Activated CD4-positive, alpha-beta T cell treated with anti-CD3 and anti-CD28 coated beads for 36 hours (primary cell): ENCODE measurements at regions of chr10 and their contacts with region 1.

Region 1: GRCh38 chr10:98664331-98665042 is 217.8 kb upstream of the HPS1 start:
- DNase-seq: peak; percentile 49
- ATAC-seq: peak; percentile 70
- H3K4me3 Mint-ChIP-seq: no peak overlapping the region
- H3K27ac Mint-ChIP-seq: no peak overlapping the region
- H3K4me1 Mint-ChIP-seq: no peaks in the 10 kb centered on the region
- H3K27me3 Mint-ChIP-seq: peaks cover 25% of the 10 kb centered on the region

Region 2: DNA sequence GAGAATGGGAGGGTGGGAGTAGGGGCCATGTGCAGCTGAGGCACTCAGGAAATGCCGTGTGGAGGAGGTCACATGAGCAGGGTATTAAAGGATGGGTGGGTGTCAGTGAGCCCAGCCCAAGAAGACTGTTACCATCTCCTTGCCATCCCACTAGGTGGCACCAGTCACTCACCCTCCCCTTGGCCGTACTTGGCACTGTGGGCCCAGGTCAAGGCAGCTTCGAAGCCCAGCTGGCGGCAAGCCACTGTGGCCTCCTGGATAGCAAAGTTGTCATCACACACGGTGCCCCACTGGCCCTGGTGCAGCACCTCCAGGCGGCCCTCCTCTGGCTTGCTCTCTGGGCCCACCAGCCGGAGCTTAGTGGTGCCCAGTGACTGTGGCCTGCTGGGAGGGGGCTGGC is 401.9 kb before region 1 on chr10:
- CTCF ChIA-PET with region 1: no interaction called
- POLR2A ChIA-PET with region 1: no interaction called
- intact Hi-C with region 1: loop called in 1 of 2 experiments (anchors 10 kb)
- DNase-seq: peak; percentile 43
- ATAC-seq: peak; percentile 55
- H3K4me3 Mint-ChIP-seq: no peak overlapping the region
- H3K27ac Mint-ChIP-seq: no peak overlapping the region
- H3K4me1 Mint-ChIP-seq: no peaks in the 10 kb centered on the region
- H3K27me3 Mint-ChIP-seq: peaks cover 16% of the 10 kb centered on the region

Region 3: DNA sequence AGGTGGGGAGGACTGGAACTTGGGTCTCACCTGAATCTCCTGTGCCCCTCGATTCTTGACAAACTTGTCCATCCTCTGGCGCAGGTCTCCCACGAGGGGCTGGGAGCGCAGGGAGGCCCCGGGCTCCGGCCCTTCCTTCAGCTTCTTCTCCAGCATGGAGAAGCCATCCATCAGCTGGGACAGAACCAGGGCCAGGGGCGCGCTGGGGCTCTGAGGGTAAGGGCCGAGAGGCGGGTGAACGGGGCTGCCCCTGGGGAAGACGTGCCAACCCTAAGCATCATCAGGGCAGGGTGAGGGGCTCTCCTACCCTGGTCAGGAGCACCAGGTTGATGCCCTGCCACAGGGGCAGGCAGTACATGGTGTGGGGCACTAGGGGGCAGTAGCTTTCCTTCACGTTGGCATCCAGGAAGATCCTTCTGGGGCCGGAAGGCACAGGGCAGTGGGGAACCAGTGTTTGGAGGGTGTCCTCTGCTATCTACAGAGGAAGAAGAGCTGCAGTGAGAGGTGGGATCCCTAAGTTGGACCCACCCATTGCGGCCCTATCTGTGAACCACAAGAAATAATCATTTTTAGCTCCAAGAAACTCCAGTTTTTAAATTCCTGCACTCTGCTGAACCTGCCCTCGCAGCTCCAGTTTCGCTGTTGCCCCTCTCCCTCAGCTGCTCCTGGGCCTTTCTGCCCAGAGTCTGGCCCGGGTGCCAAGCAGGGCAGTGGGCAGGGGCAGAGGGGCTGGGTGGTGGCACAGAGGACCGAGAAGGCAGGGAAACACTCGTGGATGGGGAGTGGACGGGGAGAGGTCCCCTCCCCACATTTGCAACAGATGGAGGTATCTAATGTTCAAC is 238.8 kb before region 1 on chr10:
- CTCF ChIA-PET with region 1: interaction called, 4 read pairs
- POLR2A ChIA-PET with region 1: no interaction called
- intact Hi-C with region 1: loop called in 1 of 2 experiments (anchors 2 kb)
- DNase-seq: peak; percentile 73
- ATAC-seq: peak; percentile 87
- H3K4me3 Mint-ChIP-seq: no peak overlapping the region
- H3K27ac Mint-ChIP-seq: no peak overlapping the region
- H3K4me1 Mint-ChIP-seq: no peaks in the 10 kb centered on the region
- H3K27me3 Mint-ChIP-seq: no peaks in the 10 kb centered on the region

Region 4: DNA sequence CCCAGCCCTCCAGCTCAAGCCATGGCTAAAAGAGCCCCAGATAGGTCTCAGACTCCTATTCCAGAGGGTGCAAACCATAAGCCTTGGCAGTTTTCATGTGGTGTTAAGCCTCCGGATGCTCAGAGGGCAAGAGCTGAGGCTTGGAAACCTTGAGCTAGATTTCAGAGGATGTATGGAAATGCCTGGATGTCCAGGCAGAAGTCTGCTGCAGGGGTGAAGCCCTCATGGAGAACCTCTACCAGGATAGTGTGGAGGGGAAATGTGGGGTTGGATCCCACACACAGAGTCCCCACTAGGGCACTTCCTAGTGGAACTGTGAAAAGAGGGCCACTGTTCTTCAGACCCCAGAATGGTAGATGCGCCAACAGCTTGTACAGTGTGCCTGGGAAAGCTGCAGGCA is 584.3 kb after region 1 on chr10:
- CTCF ChIA-PET with region 1: no interaction called
- POLR2A ChIA-PET with region 1: no interaction called
- intact Hi-C with region 1: loop called in 1 of 2 experiments (anchors 10 kb)
- DNase-seq: no peak
- ATAC-seq: no peak
- H3K4me3 Mint-ChIP-seq: no peak overlapping the region
- H3K27ac Mint-ChIP-seq: no peak overlapping the region
- H3K4me1 Mint-ChIP-seq: no peaks in the 10 kb centered on the region
- H3K27me3 Mint-ChIP-seq: peaks cover 31% of the 10 kb centered on the region